ENCODE measurements at regions of chr14 and their contacts with region 1.

Region 1: GRCh38 chr14:35140718-35141581 is 18.6 kb downstream of the PRORP start:
- DNase-seq: peak in 1 of 2 experiments; percentile 50
- H3K4me3 ChIP-seq: no peak overlapping the region
- H3K4me1 ChIP-seq: no peaks in the 10 kb centered on the region
- H3K27me3 ChIP-seq: no peaks in the 10 kb centered on the region

Region 2: GRCh38 chr14:34906287-34906686 is 234.7 kb before region 1 on chr14:
- in situ Hi-C with region 1: no loop called
- DNase-seq: no peak
- H3K4me3 ChIP-seq: no peak overlapping the region
- H3K4me1 ChIP-seq: no peaks in the 10 kb centered on the region
- H3K27me3 ChIP-seq: no peaks in the 10 kb centered on the region

Region 3: DNA sequence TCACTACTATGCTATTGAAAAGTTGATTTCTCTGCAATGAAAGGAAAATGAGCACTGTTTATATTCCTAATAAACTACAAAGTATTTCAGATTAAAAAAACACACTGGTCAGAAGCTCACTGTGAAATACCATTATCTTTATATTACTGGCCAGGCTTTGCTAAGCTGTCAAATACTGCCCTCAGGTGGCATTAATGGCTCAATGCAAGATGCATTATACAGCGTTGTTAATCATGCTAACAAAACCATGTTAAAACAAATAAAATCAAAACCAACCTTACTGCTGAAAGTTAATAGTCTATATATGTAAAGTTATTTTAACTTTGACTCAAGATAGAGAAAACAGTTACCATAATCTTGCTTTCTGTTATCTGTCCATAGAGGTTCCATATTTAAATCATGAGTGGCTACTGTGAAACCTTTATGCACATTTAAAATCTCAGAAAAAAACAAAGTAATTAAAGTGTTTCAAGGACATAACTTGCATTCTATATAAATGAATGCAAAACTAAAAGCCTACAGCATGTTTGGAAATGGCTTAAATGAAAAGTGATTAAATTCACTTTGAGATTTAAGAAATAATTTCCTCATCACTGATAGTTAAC is 546.5 kb after region 1 on chr14:
- in situ Hi-C with region 1: loop called (anchors 10 kb)
- DNase-seq: peak; percentile 61 to 69
- H3K4me3 ChIP-seq: no peak overlapping the region
- H3K4me1 ChIP-seq: no peaks in the 10 kb centered on the region
- H3K27me3 ChIP-seq: no peaks in the 10 kb centered on the region